ENCODE measurements at regions of chr2 and their contacts with region 1.

Region 1: DNA sequence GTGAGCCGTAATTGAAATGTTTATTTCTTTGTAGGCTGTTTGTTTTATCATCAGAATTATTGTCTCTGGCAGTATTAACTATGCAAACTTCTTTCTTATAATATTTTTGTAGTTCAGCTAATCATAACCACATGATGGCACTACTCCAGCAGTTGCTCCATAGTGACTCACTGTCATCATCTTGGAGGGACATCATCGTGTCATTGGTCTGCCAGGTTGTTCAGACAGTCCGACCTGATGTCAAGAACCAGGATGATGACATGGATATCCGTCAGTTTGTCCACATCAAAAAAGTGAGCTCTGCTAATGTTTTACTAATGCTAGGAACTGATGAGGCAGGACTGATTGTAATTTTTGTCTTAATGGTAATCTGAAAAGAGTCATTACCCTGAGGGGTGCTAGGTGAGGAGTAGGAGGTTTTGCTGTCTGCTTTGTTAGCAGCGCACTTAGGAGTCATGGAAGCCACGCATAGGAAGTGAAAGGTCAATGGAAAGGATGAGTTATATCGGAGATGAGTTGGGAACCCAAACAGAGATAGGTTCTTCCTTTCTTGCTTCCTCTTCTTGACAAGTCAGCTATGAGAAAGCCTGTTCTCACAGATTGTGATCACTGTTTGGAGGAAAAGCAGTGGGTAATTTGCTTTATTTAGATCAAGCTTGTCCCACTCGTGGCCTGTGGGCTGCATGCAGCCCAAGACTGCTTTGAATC is 49.2 kb downstream of the PIKFYVE start:
- DNase-seq: no peak

Region 2: GRCh38 chr2:208269091-208269490 is 46.1 kb before region 1 on chr2:
- intact Hi-C with region 1: no loop called
- DNase-seq: no peak

Region 3: GRCh38 chr2:208294482-208295024 is 20.7 kb before region 1 on chr2:
- intact Hi-C with region 1: loop called in 1 of 2 experiments (anchors 1 kb)
- DNase-seq: no peak

Region 4: GRCh38 chr2:209741953-209742352 is 1426.7 kb after region 1 on chr2:
- intact Hi-C with region 1: no loop called
- DNase-seq: no peak